Calu3 (cell line): ENCODE measurements at regions of chr19 and their contacts with region 1.

Region 1: DNA sequence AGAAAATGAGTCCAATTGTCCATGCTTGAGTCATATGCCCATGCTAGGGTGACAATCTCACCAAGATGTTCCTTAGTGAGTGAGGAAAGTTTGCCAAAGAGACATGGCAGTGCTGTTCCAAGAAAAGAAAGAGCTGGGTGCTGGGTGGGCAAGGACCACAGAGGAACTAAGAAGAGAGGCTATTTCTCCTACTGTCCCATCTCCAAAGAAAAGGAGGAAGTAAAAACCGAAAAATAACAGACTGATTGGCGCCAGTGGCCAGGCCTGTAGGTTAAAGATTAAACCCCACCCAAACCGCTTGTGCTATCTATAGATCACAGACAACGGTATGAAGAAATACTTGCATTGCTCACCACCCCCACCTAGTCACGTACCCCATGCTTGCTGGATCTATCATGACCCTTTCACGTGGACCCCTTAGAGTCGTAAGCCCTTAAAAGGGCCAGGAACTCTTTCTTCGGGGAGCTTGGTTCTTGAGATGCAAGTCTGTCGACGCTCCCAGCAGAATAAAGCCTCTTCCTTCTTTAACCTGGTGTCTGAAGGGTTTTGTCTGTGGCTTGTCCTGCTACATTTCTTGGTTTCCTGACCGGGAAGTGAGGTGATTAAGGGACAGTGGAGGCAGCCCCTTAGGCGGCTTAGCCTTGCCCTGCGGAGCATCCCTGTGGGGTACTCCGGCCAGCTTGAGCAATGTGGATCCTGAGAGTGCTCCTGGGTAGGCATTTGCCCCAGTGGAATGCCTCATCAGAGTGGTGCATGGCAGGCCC is 606.5 kb downstream of the UQCRFS1 start:
- DNase-seq: peak; percentile 53
- H3K4me3 Mint-ChIP-seq: peak overlapping the region; percentile 34
- H3K27ac Mint-ChIP-seq: peak overlapping the region; percentile 58
- H3K4me1 Mint-ChIP-seq: peaks cover 30% of the 10 kb centered on the region
- H3K27me3 Mint-ChIP-seq: no peaks in the 10 kb centered on the region
- CTCF ChIP-seq: no peak

Region 2: GRCh38 chr19:27793644-27794493 is 812.6 kb before region 1 on chr19:
- CTCF ChIA-PET with region 1: no interaction called
- intact Hi-C with region 1: loop called (anchors 5 kb)
- DNase-seq: peak; percentile 92
- H3K4me3 Mint-ChIP-seq: peak overlapping the region; percentile 81
- H3K27ac Mint-ChIP-seq: peak overlapping the region; percentile 72
- H3K4me1 Mint-ChIP-seq: no peaks in the 10 kb centered on the region
- H3K27me3 Mint-ChIP-seq: no peaks in the 10 kb centered on the region
- CTCF ChIP-seq: no peak